PC-3 (cell line): ENCODE measurements at regions of chr5 and their contacts with region 1.

Region 1: GRCh38 chr5:39058178-39058921 is 15.8 kb downstream of the RICTOR start:
- DNase-seq: no peak
- ATAC-seq: no peak
- H3K4me3 ChIP-seq: 0 out of 2 replicates have a peak overlapping the region, but pooled peaks have one; percentile 5
- H3K27ac ChIP-seq: no peak overlapping the region
- H3K4me1 ChIP-seq: peaks cover 8% of the 10 kb centered on the region; the same call in 1 of the 2 replicates
- H3K27me3 ChIP-seq: no peaks in the 10 kb centered on the region
- CTCF ChIP-seq: no peak

Region 2: DNA sequence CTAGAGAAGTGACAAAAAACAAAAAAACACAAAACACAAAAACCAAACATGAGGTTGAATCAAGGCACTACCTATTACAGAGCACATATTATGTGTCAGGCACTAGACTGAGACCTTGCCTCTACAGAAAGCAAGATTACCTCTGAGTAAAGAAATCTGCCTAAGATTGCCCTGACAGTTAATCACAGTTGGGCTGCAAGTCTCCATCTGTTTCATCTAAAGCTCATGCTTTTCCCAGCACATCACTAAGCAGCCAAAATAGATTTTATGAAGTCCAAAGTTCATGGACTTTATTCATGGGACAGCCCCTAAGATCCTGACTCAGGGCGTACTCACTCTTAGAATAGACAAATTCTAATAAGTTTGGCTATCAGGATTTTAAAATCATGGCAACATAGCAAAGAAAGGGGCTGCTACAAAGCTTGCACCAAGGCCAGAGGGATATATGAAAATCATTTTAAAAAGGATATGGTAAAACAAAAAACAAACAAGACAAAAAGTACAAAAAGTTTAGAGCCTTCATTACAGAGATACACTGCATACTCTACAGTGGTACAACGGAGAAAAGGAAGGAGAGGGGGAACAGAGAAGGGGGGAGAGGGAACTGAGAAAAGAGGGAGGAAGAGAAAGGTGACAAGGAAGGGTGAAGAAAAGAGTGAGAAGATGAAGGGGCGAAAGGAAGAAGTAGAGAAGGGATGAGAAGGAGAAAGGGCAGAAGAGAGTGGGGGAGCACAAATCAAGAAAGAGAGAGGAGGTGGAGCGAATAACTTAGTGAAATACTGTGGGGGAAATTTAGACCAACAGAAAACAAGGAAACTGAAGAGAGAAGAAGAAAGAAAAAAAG is 42.4 kb before region 1 on chr5:
- CTCF ChIA-PET with region 1: no interaction called
- POLR2A ChIA-PET with region 1: no interaction called
- intact Hi-C with region 1: loop called (anchors 5 kb)
- DNase-seq: peak; percentile 85
- ATAC-seq: peak; percentile 96
- H3K4me3 ChIP-seq: peak overlapping the region; percentile 16; the same call in 1 of the 2 replicates
- H3K27ac ChIP-seq: peak overlapping the region; percentile 53
- H3K4me1 ChIP-seq: peaks cover 21% of the 10 kb centered on the region
- H3K27me3 ChIP-seq: no peaks in the 10 kb centered on the region
- CTCF ChIP-seq: no peak

Region 3: GRCh38 chr5:39132128-39132447 is 73.7 kb after region 1 on chr5:
- CTCF ChIA-PET with region 1: no interaction called
- POLR2A ChIA-PET with region 1: interaction called, 17 read pairs
- intact Hi-C with region 1: no loop called
- DNase-seq: no peak
- ATAC-seq: no peak
- H3K4me3 ChIP-seq: no peak overlapping the region
- H3K27ac ChIP-seq: no peak overlapping the region
- H3K4me1 ChIP-seq: peaks cover 10% of the 10 kb centered on the region; the same call in 1 of the 2 replicates
- H3K27me3 ChIP-seq: no peaks in the 10 kb centered on the region
- CTCF ChIP-seq: no peak